PC-9 (cell line): ENCODE measurements at regions of chr16 and their contacts with region 1.

Region 1: DNA sequence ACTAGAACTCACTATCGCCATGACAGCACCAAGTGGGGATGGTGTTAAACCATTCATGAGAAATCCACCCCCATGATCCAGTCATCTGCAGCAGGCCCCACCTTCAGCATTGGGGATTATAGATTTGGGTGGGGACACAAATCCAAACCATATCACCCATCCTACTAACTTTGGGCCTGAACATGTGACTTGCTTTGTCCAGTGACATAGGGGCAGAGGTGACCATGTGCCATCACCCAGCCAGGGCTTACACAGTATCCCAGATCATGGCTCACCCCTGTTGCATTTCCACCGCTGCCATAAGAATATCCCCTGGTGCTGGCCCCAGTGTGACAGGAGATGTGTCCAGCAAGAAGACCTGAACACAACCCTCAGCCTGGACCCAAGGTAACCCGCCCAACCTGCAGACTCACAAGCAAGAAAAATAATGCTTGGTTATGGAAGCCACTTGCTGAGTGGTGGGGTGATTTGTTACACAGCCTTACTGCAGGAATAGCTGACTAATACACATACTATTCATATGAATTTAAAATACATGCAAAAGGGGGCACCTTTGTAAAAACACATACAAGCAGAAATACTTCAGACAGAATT is 130.9 kb downstream of the GSG1L start:
- DNase-seq: no peak
- H3K4me3 ChIP-seq: no peak overlapping the region
- H3K27ac ChIP-seq: no peak overlapping the region
- H3K4me1 ChIP-seq: no peaks in the 10 kb centered on the region
- H3K27me3 ChIP-seq: peaks cover 94% of the 10 kb centered on the region
- CTCF ChIP-seq: no peak

Region 2: GRCh38 chr16:27326738-27327585 is 605.7 kb before region 1 on chr16:
- CTCF ChIA-PET with region 1: no interaction called
- POLR2A ChIA-PET with region 1: no interaction called
- intact Hi-C with region 1: no loop called
- DNase-seq: peak; percentile 97 to 99
- H3K4me3 ChIP-seq: peak overlapping the region; percentile 11; the same call in 1 of the 2 replicates
- H3K27ac ChIP-seq: peak overlapping the region; percentile 98
- H3K4me1 ChIP-seq: peaks cover 60% of the 10 kb centered on the region
- H3K27me3 ChIP-seq: no peaks in the 10 kb centered on the region
- CTCF ChIP-seq: 0 out of 2 replicates have a peak, but pooled peaks have one; percentile 34

Region 3: DNA sequence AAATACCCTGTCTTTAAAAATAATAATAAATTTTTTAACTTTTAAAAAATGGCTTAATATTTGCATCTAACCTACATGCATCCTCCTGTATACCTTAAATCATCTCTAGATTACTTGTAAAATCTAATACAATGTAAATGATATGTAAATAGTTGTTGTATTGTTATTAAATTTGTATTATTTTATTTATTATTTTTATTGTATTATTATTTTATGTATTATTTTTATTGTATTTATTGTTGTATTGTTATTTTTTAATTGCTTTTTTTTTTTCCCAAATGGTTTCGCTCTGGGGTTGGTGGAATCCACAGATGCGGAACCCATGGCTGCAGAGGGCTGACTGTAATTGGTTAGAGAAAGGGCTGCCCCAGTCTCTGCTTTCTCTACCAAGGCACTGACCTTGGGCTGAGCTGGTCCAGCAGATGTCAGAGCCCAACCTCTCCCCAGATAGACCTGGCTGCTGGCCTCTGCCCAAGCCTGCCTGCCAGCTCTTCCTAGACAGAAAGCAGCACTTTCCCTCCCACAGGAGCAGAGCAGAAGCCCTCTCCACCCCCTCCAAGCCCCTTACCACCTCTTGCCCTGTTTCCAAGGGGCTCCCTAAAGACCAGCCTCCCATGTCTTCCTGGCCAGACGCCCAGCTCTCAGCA is 52.9 kb before region 1 on chr16:
- CTCF ChIA-PET with region 1: no interaction called
- POLR2A ChIA-PET with region 1: interaction called, 19 read pairs
- intact Hi-C with region 1: no loop called
- DNase-seq: no peak
- H3K4me3 ChIP-seq: no peak overlapping the region
- H3K27ac ChIP-seq: no peak overlapping the region
- H3K4me1 ChIP-seq: no peaks in the 10 kb centered on the region
- H3K27me3 ChIP-seq: peaks cover 55% of the 10 kb centered on the region
- CTCF ChIP-seq: no peak